ENCODE measurements at regions of chr1 and their contacts with region 1.

Region 1: DNA sequence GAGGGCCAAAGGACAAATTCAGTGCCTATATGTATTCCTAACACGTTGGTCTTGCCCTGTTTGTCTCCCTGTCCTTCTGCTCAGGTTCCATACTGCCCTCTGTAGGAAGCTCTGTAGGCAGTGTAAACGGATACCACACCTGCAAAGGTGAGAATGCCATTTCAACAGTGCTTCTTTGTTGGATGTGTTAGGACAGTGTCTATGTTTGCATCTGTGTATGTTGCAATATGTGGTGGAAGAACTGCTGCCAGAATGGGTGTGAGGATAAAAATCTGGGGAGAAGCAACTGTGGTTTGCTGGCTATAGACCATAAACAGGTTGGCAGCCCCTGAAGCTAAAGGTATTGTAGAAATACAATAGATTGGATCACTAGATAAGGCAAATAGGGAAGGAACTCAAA is 113.1 kb upstream of the BMP8A start:
- DNase-seq: peak; percentile 30 to 47
- ATAC-seq: peak in 1 of 2 experiments; percentile 79; a peak in 4 of 6 replicates
- H3K4me3 ChIP-seq: no peak overlapping the region
- H3K27ac ChIP-seq: no peak overlapping the region
- H3K4me1 ChIP-seq: no peaks in the 10 kb centered on the region
- CTCF ChIP-seq: peak; percentile 55
- EP300 ChIP-seq: no peak
- POLR2A ChIP-seq: no peak
- RAD21 ChIP-seq: peak; percentile 48 to 50; a peak in 4 of 5 replicates

Region 2: GRCh38 chr1:39268112-39268581 is 110.2 kb before region 1 on chr1:
- CTCF ChIA-PET with region 1: no interaction called
- POLR2A ChIA-PET with region 1: no interaction called
- DNase-seq: no peak
- ATAC-seq: no peak
- H3K4me3 ChIP-seq: no peak overlapping the region
- H3K27ac ChIP-seq: peak overlapping the region in 1 of 2 experiments; percentile 77; a peak in 1 of 6 replicates
- H3K4me1 ChIP-seq: peaks cover 32% of the 10 kb centered on the region
- CTCF ChIP-seq: no peak
- EP300 ChIP-seq: no peak
- POLR2A ChIP-seq: no peak
- RAD21 ChIP-seq: no peak

Region 3: DNA sequence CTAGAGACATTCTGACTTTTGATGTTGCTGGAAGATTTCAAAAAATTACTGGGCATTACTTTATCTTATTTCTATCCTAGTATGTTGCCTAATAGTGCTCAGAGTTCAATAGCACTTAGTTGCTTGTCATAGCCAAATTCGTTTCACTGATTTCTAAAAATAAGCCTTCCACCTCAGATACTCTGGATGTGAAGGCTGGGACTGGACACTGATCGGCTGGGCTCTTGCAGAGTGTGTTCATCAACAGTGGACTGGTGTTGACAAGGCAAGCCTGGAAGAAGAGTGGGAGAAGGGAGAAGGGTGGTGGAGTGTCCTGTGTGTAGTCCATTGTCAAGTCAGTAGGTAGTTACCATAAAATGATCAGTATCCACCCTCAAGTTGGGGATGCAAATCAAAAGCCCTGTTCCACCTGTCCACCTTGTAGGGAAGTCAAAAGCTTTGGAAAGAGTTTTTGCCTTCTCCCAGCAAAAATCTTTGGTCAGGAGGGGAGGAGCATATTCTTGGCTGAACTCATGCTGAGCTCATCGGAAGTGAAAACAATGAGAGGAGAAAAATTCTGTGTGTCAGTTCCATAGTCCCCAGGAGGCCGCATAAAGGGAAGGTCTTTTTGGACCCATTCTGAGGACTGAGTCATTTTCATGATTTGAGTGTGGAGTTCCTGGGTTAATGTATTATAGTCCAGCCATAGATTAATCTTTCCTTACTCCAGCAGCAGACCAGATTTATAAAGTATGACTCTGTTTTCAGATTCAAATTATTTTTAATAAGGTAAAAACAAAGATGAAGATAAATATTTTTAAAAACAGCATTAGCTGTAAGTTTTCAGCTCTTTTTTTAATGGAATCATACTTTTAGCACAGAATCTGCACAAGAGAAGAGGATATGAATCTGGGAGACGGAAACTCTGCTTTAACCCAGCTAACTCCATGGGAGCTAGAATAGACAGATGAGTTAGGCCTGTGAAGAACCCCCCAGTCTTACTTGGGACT is 13.6 kb after region 1 on chr1:
- CTCF ChIA-PET with region 1: interaction called, 11 read pairs
- POLR2A ChIA-PET with region 1: no interaction called
- DNase-seq: peak; percentile 74 to 75
- ATAC-seq: peak; percentile 76 to 85
- H3K4me3 ChIP-seq: peak overlapping the region; percentile 19; the same call in 1 of the 3 replicates
- H3K27ac ChIP-seq: peak overlapping the region; percentile 89 to 93
- H3K4me1 ChIP-seq: peaks cover 75% of the 10 kb centered on the region
- CTCF ChIP-seq: no peak
- EP300 ChIP-seq: peak in 1 of 2 experiments; percentile 39; a peak in 1 of 5 replicates
- POLR2A ChIP-seq: no peak
- RAD21 ChIP-seq: no peak

Region 4: GRCh38 chr1:39754906-39755504 is 376.6 kb after region 1 on chr1:
- CTCF ChIA-PET with region 1: no interaction called
- POLR2A ChIA-PET with region 1: no interaction called
- DNase-seq: no peak
- ATAC-seq: no peak
- H3K4me3 ChIP-seq: no peak overlapping the region
- H3K27ac ChIP-seq: no peak overlapping the region
- H3K4me1 ChIP-seq: no peaks in the 10 kb centered on the region
- CTCF ChIP-seq: no peak
- EP300 ChIP-seq: no peak
- POLR2A ChIP-seq: no peak
- RAD21 ChIP-seq: no peak